PC-3 (cell line): ENCODE measurements at regions of chr1 and their contacts with region 1.

Region 1: DNA sequence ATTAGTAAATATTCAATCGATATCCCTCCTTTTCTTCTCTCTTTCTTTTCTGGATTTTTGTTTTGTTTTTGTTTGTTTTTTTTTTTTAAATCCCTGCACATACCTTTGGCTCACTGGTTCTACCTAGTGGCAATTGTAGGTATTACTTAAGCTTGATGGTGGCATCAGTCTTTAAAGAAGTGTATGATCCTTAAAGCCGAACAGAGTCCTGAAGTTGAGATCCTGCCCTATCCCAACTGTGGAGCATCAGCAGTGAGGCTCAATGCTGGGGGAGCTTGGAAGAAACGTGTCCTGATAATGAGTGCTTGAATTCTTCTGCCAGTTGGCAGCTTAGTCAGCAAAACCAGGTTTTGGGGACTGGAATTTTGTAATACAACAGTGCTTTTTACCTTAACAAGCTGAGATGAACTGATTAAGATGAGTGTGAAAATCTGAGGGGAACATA is 60.8 kb downstream of the FASLG start:
- DNase-seq: peak; percentile 97
- ATAC-seq: peak; percentile 81
- H3K4me3 ChIP-seq: no peak overlapping the region
- H3K27ac ChIP-seq: no peak overlapping the region
- H3K4me1 ChIP-seq: peaks cover 32% of the 10 kb centered on the region
- H3K27me3 ChIP-seq: no peaks in the 10 kb centered on the region
- CTCF ChIP-seq: peak; percentile 100

Region 2: DNA sequence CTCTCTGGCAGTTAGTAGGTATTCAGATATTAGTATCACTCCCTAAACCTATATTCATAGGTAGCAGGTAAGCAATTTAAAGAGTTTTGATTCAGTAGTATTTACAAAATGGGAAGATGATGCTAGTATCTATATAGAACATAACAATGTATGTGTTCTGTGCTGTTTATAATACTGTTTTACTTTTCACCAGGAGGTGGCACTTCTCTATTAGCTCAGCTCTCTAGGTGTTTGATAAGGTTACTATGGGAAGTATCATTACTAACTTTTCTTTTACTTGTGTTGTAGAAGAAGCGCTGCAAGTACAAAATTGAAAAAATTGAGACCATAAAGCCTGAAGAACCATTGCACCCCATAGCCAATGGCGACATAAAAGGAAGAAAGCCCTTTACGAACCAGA is 110.2 kb before region 1 on chr1:
- CTCF ChIA-PET with region 1: interaction called, 40 read pairs
- POLR2A ChIA-PET with region 1: interaction called, 3 read pairs
- intact Hi-C with region 1: loop called (anchors 1 kb)
- DNase-seq: peak; percentile 88
- ATAC-seq: peak; percentile 93
- H3K4me3 ChIP-seq: no peak overlapping the region
- H3K27ac ChIP-seq: no peak overlapping the region
- H3K4me1 ChIP-seq: 0 out of 2 replicates have a peak, but pooled peaks cover 8% of the 10 kb centered on the region
- H3K27me3 ChIP-seq: no peaks in the 10 kb centered on the region
- CTCF ChIP-seq: peak; percentile 99

Region 3: GRCh38 chr1:172630056-172630818 is 89.5 kb before region 1 on chr1:
- CTCF ChIA-PET with region 1: interaction called, 10 read pairs
- POLR2A ChIA-PET with region 1: no interaction called
- intact Hi-C with region 1: no loop called
- DNase-seq: peak; percentile 73
- ATAC-seq: peak; percentile 69
- H3K4me3 ChIP-seq: no peak overlapping the region
- H3K27ac ChIP-seq: peak overlapping the region; percentile 21
- H3K4me1 ChIP-seq: peaks cover 21% of the 10 kb centered on the region
- H3K27me3 ChIP-seq: no peaks in the 10 kb centered on the region
- CTCF ChIP-seq: no peak